Cardiac septum (tissue), 1 donor: ENCODE measurements at regions of chr17 and their contacts with region 1.

Region 1: DNA sequence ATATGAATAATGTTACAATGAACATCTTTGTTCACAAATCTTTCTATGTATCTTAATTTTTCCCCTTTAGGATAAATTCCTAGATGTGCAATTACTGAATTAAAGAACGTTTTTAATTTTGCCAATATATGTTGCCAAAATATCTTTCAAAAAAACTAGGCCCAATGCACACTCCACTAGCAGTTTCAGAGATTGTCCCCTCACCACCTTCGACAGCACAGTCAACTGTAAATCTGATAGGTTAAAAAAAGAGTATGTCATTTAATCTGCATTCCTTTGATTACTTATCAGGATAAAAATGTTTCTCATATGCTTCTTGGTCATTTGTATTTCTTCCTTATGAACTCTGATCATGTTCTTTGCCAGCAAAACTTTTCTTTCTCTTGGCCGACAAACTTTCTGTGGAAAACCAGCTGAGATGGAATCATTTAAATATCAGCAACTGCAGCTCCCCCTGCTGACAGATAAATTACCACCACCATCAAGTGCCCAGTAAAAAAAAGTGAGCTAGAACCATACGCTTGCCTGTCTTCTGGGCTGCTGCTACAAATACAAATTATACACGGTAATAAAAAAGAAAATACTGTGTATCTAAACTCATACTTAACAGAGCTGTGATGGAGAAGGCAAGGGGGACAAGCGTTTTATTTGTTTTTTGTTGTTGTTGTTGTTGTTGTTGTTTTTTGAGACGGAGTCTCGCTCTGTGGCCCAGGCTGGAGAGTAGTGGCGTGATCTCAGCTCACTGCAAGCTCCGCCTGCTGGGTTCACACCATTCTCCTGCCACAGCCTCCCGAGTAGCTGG is 19.6 kb upstream of the KANSL1 start:
- DNase-seq: no peak

Region 2: DNA sequence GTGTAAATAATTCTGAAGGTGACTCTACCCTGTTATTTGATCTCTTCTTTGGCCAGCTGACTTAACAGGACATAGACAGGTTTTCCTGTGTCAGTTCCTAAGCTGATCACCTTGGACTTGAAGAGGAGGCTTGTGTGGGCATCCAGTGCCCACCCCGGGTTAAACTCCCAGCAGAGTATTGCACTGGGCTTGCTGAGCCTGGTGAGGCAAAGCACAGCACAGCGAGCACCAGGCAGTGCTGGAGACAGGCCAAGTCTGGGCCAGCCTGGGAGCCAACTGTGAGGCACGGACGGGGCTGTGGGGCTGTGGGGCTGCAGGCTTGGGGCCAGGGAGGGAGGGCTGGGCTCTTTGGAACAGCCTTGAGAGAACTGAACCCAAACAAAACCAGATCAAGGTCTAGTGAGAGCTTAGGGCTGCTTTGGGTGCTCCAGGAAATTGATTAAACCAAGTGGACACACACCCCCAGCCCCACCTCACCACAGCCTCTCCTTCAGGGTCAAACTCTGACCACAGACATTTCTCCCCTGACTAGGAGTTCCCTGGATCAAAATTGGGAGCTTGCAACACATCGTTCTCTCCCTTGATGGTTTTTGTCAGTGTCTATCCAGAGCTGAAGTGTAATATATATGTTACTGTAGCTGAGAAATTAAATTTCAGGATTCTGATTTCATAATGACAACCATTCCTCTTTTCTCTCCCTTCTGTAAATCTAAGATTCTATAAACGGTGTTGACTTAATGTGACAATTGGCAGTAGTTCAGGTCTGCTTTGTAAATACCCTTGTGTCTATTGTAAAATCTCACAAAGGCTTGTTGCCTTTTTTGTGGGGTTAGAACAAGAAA is 208.7 kb before region 1 on chr17:
- intact Hi-C with region 1: loop called (anchors 1 kb)
- DNase-seq: no peak

Region 3: DNA sequence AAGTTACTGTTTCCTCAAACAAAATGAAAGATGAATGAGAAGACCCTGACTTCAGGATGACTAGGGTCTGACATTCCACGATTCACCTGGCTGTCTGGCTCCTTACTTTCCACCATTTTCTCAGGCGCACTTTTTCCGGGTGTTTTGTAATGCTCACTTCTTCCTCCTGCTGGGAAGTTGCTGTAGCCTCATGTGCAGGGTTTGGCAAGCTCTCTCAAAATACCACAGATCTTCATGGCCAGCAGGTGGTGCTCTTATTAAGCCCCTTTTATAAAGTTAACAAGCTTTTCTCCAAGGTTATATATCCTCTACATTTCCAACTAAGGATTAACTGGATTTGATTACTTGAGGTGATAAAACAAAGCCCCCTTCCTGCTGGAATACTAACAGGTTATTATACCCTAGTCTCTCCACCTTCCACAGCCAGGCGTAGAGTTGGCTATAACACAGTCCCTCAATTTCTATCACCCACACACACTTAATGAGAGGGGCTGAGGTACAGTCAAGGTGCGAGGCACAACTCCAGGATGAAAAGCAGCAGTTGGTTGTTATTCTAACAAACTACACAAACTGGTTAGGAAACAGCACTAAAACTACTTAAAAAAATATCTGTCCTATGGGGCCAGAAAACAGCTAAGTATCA is 168.4 kb before region 1 on chr17:
- intact Hi-C with region 1: loop called (anchors 5 kb)
- DNase-seq: no peak

Region 4: GRCh38 chr17:46266656-46267544 is 54.1 kb after region 1 on chr17:
- intact Hi-C with region 1: no loop called
- DNase-seq: peak; percentile 92

Region 5: DNA sequence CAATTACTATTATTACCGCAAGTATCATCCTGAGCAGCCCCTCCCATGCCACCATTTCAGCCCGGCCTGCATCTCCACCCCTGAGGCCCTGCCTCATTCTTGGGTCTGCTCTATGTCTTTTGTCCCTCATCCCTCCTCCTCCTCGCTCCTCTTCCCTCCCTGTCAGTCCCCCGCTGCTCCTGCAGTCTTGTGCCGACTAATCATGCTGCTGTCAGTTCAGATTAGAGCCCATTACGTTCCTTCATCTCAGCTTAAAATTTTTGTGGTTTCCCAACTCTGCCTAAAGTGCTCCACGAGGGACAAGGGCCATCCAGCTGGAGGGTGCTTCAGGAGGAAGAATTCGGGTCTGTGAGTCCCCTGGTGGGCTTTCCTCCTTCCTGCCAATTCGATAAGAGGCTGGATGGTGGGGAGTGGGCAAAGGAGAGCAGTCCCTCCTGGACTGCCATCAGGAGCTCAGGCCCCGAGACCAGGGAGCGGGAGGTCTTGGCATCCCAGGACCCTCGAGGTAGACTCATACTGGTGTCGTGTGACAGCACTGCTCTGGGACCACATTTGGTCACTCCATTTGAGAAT is 677.2 kb after region 1 on chr17:
- intact Hi-C with region 1: no loop called
- DNase-seq: no peak